ENCODE measurements at regions of chr9 and their contacts with region 1.

Region 1: GRCh38 chr9:126604059-126605055 is 9.4 kb upstream of the LMX1B start:
- DNase-seq: no peak
- ATAC-seq: peak; percentile 66 to 91 (median 78)
- H3K4me3 ChIP-seq: no peak overlapping the region
- H3K27ac ChIP-seq: peak overlapping the region in 5 of 10 donors; percentile 30 to 69 (median 58)
- H3K4me1 ChIP-seq: peaks cover 0 to 32% (median 0%) of the 10 kb centered on the region in 9 donors
- H3K27me3 ChIP-seq: peaks cover 0 to 27% (median 17%) of the 10 kb centered on the region in 7 donors
- CTCF ChIP-seq: no peak

Region 2: DNA sequence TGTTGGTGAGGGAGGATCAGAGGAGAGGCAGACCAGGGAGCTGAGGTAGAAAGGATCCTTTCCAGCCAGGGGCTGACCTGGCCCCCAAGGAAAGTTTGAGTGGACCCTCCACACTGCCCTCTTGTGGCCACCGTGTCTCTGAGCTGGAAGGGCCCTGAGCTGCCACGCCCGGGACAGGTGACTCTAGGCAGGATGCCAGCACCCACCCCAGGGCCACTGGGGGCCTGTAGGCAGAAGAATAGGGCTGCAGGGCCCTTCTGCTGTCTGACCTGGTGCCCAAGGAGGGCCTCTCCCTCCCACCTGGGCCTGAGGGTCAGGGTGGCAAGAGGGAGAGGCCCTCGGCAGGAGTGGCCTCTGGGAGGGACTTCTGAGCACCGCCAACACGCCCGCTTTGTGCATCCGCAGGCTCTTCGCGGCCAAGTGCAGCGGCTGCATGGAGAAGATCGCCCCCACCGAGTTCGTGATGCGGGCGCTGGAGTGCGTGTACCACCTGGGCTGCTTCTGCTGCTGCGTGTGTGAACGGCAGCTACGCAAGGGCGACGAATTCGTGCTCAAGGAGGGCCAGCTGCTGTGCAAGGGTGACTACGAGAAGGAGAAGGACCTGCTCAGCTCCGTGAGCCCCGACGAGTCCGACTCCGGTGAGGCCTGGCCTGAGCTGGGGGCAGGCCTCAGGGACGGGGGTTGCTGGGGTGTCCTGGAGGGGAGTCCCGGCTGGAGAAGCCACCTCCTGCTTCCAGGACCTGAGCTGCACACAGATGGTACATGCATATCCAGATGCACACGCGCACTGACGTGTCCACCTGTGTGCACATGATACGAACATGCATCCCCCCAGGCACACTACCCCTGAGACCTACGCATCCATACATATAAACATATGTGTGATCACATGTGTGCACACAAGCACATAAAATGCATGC is 86.3 kb after region 1 on chr9:
- intact Hi-C with region 1: loop called in 1 of 10 experiments (anchors 5 kb)
- DNase-seq: peak; percentile 25 to 55
- ATAC-seq: peak; percentile 32 to 65 (median 45)
- H3K4me3 ChIP-seq: no peak overlapping the region
- H3K27ac ChIP-seq: no peak overlapping the region
- H3K4me1 ChIP-seq: no peaks in the 10 kb centered on the region
- H3K27me3 ChIP-seq: peaks cover 0 to 55% (median 48%) of the 10 kb centered on the region in 7 donors
- CTCF ChIP-seq: peak; percentile 50 to 78 (median 66)

Measured in heart right ventricle (tissue), 16 donors.